AG04450 (cell line): ENCODE measurements at regions of chr11 and their contacts with region 1.

Region 1: DNA sequence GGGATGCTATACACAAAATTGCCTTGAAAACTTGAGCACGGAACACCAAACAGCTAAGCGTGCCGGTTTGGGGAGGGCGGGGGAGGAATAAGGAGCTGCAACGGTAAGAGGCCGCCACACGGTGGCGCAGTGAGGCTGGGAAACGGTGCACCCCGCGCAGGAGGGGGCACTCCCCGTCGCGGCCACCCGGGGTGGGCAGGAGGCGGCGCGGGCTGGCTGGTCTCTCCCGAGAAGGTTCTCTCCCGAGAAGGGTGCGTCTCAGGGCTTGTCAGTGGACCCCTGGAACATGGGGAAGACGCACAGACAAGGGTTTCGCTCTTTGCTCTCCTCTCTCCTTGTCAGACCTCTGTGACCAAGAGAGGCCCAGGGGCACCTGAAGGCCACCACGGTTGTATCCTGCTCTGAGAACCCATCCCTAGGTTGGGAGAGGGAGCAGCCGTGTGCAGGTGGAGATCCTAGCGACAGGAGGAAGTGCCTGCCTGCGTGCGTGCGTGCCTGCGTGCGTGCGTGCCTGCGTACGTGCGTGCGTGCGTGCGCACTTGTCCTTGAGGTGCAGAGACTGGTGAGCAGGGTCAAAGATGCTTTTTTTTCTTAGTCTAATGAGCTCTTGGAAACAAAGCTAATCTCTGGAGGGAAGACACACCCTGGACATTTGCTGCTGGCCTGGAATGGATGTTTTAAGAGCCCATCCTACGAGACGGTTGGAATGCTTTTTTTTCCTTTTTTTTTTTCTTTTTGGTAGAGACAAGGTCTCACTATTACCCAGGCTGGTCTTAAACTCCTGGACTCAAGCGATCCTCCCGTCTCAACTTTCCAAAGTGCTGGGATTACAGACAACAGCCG is 18.1 kb upstream of the JAM3 start:
- DNase-seq: no peak
- H3K4me3 ChIP-seq: peak overlapping the region; percentile 47
- H3K27ac ChIP-seq: no peak overlapping the region
- H3K27me3 ChIP-seq: no peaks in the 10 kb centered on the region
- CTCF ChIP-seq: peak; percentile 89

Region 2: GRCh38 chr11:134037046-134037908 is 13.5 kb before region 1 on chr11:
- CTCF ChIA-PET with region 1: interaction called, 44 read pairs
- POLR2A ChIA-PET with region 1: interaction called, 5 read pairs
- DNase-seq: peak; percentile 32
- H3K4me3 ChIP-seq: peak overlapping the region; percentile 68
- H3K27ac ChIP-seq: peak overlapping the region; percentile 52
- H3K27me3 ChIP-seq: peaks cover 3% of the 10 kb centered on the region
- CTCF ChIP-seq: no peak

Region 3: DNA sequence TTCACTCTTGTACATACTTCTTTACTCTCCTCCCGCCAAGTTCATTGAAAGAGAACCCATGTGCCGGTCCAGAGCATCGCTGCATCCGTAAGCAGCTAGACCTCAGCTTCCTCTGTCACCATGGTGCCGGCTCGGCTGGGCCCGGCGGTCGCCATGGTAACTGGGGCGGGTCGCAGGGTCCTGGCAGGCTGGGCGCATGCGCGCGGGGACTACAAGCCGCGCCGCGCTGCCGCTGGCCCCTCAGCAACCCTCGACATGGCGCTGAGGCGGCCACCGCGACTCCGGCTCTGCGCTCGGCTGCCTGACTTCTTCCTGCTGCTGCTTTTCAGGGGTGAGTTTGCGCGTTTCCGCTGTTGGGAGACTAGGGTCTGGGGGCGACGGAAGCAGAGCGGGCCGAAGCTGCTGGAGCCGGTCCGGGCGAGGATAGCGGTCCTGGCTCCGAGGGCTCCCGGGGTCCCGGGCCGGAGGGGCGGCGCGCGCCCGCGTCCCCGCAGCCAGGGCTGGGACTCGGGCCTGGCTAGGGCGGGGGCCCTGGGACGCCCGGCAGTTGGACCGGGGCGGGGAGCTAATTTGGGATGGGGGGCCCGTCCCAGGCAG is 18.2 kb after region 1 on chr11 and contains the start of gene JAM3:
- CTCF ChIA-PET with region 1: interaction called, 61 read pairs
- POLR2A ChIA-PET with region 1: interaction called, 5 read pairs
- DNase-seq: peak; percentile 76
- H3K4me3 ChIP-seq: peak within 1 kb of the TSS; percentile 86
- H3K27ac ChIP-seq: peak within 1 kb of the TSS; percentile 31
- H3K27me3 ChIP-seq: peaks cover 14% of the 10 kb centered on the region
- CTCF ChIP-seq: no peak
- polyA plus RNA-seq, gene JAM3: 66.2 and 79.6 TPM in 2 replicates

Region 4: DNA sequence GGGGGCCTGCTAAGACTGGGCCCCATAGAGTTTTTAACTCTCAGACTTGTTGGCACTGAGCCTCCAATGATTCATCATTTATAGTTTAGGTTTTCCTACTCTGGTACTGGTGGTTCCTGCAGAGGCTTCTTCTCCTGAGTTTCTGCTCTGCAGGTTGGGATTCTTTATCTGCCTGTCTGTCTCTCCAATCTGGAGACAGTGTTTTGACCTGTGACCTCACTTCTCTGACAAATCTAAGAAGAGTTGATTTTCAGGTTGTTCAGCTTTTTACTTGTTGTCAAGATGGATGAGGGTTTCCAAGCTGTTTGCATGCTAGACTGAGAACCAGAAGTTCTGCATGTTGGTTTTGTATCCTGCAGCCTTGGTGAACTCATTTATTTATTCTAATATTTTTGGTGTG is 82.0 kb after region 1 on chr11:
- CTCF ChIA-PET with region 1: interaction called, 59 read pairs
- POLR2A ChIA-PET with region 1: no interaction called
- DNase-seq: no peak
- H3K4me3 ChIP-seq: no peak overlapping the region
- H3K27ac ChIP-seq: no peak overlapping the region
- H3K27me3 ChIP-seq: no peaks in the 10 kb centered on the region
- CTCF ChIP-seq: no peak

Region 5: GRCh38 chr11:134150195-134150903 is 99.6 kb after region 1 on chr11:
- CTCF ChIA-PET with region 1: interaction called, 22 read pairs
- POLR2A ChIA-PET with region 1: no interaction called
- DNase-seq: no peak
- H3K4me3 ChIP-seq: no peak overlapping the region
- H3K27ac ChIP-seq: peak overlapping the region; percentile 11
- H3K27me3 ChIP-seq: no peaks in the 10 kb centered on the region
- CTCF ChIP-seq: no peak